RWPE1 (cell line): ENCODE measurements at regions of chr6 and their contacts with region 1.

Region 1: GRCh38 chr6:4055420-4056041 is 23.4 kb downstream of the FAM217A start:
- DNase-seq: peak; percentile 78
- H3K27ac ChIP-seq: no peak overlapping the region
- CTCF ChIP-seq: peak; percentile 75

Region 2: GRCh38 chr6:3966426-3966825 is 89.1 kb before region 1 on chr6:
- CTCF ChIA-PET with region 1: no interaction called
- POLR2A ChIA-PET with region 1: no interaction called
- DNase-seq: no peak
- H3K27ac ChIP-seq: no peak overlapping the region
- CTCF ChIP-seq: no peak

Region 3: GRCh38 chr6:4155848-4156466 is 100.4 kb after region 1 on chr6:
- CTCF ChIA-PET with region 1: interaction called, 33 read pairs
- POLR2A ChIA-PET with region 1: no interaction called
- DNase-seq: peak; percentile 84
- H3K27ac ChIP-seq: no peak overlapping the region
- CTCF ChIP-seq: peak; percentile 86